ENCODE measurements at regions of chr5 and their contacts with region 1.

Region 1: GRCh38 chr5:54492178-54492577 is 25.4 kb upstream of the SNX18 start:
- DNase-seq: no peak
- ATAC-seq: no peak
- H3K4me3 ChIP-seq: no peak overlapping the region
- H3K4me3 Mint-ChIP-seq: no peak overlapping the region
- H3K27ac ChIP-seq: no peak overlapping the region
- H3K27ac Mint-ChIP-seq: no peak overlapping the region
- H3K4me1 ChIP-seq: no peaks in the 10 kb centered on the region
- H3K4me1 Mint-ChIP-seq: peaks cover 0 to 4% (median 0%) of the 10 kb centered on the region in 3 donors
- H3K27me3 ChIP-seq: peaks cover 0 to 4% of the 10 kb centered on the region in 2 experiments
- H3K27me3 Mint-ChIP-seq: peaks cover 4 to 5% of the 10 kb centered on the region in 2 donors

Region 2: DNA sequence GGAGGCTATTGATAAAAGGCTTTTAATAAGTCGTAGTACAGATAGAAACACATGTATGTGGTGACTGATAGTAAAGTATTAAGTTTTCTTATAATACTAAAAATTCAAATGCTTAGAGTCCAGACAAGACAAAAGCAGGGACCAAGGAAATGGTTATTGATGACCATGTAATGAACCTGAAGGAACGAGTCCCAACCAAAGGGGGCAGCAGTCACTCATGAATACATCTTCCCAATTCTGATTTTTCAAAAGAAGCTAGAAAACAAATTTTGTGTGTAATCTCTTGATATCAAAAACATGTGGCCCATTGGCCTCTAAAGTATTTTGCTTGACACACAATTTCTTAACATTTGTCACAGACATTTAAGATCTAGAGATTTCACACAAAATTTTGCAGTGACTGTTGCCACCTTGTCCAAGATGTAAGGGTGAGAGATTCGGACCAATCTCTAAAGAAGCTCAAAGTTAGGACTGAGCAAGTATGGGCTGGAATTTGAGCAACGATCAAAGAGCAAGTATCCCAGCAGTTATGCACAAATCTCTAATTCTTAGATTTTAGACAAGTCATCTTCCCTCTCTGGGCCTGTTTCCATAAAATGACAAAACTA is 248.6 kb before region 1 on chr5:
- CTCF ChIA-PET with region 1: interaction called, 9 to 16 read pairs
- POLR2A ChIA-PET with region 1: no interaction called
- DNase-seq: peak in 24 of 35 experiments; percentile 3 to 62 (median 16)
- ATAC-seq: no peak
- H3K4me3 ChIP-seq: no peak overlapping the region
- H3K4me3 Mint-ChIP-seq: no peak overlapping the region
- H3K27ac ChIP-seq: no peak overlapping the region
- H3K27ac Mint-ChIP-seq: no peak overlapping the region
- H3K4me1 ChIP-seq: no peaks in the 10 kb centered on the region
- H3K4me1 Mint-ChIP-seq: peaks cover 9 to 18% (median 14%) of the 10 kb centered on the region in 3 donors
- H3K27me3 ChIP-seq: no peaks in the 10 kb centered on the region
- H3K27me3 Mint-ChIP-seq: no peaks in the 10 kb centered on the region

Region 3: DNA sequence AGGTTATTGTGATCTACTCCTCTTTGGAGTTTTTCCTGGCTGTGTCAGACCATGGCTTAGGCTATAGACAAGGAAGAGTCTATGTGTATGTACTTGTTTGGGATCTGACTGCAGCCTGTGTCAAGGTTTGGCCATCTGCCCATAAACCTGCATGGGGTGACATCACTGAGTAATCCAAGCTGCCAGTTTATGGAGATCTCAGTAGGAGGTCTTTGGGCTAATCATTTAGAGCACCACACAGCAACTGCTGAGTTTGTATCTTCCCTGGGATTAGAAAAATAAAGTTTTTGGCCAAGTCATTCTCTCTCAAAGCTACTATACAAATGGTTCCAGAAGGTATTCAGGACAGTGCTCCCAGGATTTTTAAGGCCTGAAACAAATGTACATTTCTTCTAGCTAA is 102.2 kb before region 1 on chr5:
- CTCF ChIA-PET with region 1: no interaction called
- POLR2A ChIA-PET with region 1: no interaction called
- DNase-seq: no peak
- ATAC-seq: no peak
- H3K4me3 ChIP-seq: no peak overlapping the region
- H3K4me3 Mint-ChIP-seq: no peak overlapping the region
- H3K27ac ChIP-seq: no peak overlapping the region
- H3K27ac Mint-ChIP-seq: no peak overlapping the region
- H3K4me1 ChIP-seq: no peaks in the 10 kb centered on the region
- H3K4me1 Mint-ChIP-seq: no peaks in the 10 kb centered on the region
- H3K27me3 ChIP-seq: no peaks in the 10 kb centered on the region
- H3K27me3 Mint-ChIP-seq: no peaks in the 10 kb centered on the region

Region 4: DNA sequence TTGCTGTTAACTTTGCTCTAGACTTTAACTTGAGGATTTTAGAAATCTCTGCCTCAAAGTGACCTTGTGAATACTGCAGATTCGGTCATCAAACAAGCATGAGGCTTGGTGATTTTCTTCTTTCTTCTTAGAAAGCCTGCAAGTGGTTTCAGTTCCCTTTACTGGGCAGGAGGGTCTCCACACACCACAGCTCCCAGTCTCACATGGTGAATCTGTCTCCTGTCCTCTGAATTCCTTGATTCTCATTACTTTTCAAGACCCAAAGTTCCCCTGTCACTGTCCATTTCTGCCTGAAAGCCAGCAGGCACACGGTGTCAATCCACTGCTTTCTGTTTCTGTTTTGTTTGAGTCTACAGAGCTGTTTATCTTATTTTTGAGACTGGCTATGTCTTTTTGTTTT is 22.6 kb before region 1 on chr5:
- CTCF ChIA-PET with region 1: interaction called, 4 to 11 read pairs
- POLR2A ChIA-PET with region 1: no interaction called
- DNase-seq: no peak
- ATAC-seq: no peak
- H3K4me3 ChIP-seq: no peak overlapping the region
- H3K4me3 Mint-ChIP-seq: peak overlapping the region in 2 of 3 donors; percentile 13 to 24
- H3K27ac ChIP-seq: no peak overlapping the region
- H3K27ac Mint-ChIP-seq: no peak overlapping the region
- H3K4me1 ChIP-seq: no peaks in the 10 kb centered on the region
- H3K4me1 Mint-ChIP-seq: peaks cover 7 to 10% (median 9%) of the 10 kb centered on the region in 3 donors
- H3K27me3 ChIP-seq: peaks cover 0 to 9% of the 10 kb centered on the region in 2 experiments
- H3K27me3 Mint-ChIP-seq: peaks cover 5 to 9% of the 10 kb centered on the region in 2 donors

Region 5: GRCh38 chr5:54480296-54480695 is 11.9 kb before region 1 on chr5:
- CTCF ChIA-PET with region 1: interaction called in 1 of 2 experiments, 11 read pairs
- POLR2A ChIA-PET with region 1: no interaction called
- DNase-seq: no peak
- ATAC-seq: no peak
- H3K4me3 ChIP-seq: no peak overlapping the region
- H3K4me3 Mint-ChIP-seq: no peak overlapping the region
- H3K27ac ChIP-seq: no peak overlapping the region
- H3K27ac Mint-ChIP-seq: no peak overlapping the region
- H3K4me1 ChIP-seq: no peaks in the 10 kb centered on the region
- H3K4me1 Mint-ChIP-seq: no peaks in the 10 kb centered on the region
- H3K27me3 ChIP-seq: peaks cover 0 to 6% of the 10 kb centered on the region in 2 experiments
- H3K27me3 Mint-ChIP-seq: peaks cover 18 to 24% of the 10 kb centered on the region in 2 donors

Region 6: GRCh38 chr5:54537725-54538124 is 45.5 kb after region 1 on chr5:
- CTCF ChIA-PET with region 1: no interaction called
- POLR2A ChIA-PET with region 1: no interaction called
- DNase-seq: no peak
- ATAC-seq: no peak
- H3K4me3 ChIP-seq: no peak overlapping the region
- H3K4me3 Mint-ChIP-seq: no peak overlapping the region
- H3K27ac ChIP-seq: no peak overlapping the region
- H3K27ac Mint-ChIP-seq: no peak overlapping the region
- H3K4me1 ChIP-seq: peaks cover 5 to 12% of the 10 kb centered on the region in 2 experiments
- H3K4me1 Mint-ChIP-seq: peaks cover 54 to 61% (median 54%) of the 10 kb centered on the region in 3 donors
- H3K27me3 ChIP-seq: no peaks in the 10 kb centered on the region
- H3K27me3 Mint-ChIP-seq: no peaks in the 10 kb centered on the region

Region 7: DNA sequence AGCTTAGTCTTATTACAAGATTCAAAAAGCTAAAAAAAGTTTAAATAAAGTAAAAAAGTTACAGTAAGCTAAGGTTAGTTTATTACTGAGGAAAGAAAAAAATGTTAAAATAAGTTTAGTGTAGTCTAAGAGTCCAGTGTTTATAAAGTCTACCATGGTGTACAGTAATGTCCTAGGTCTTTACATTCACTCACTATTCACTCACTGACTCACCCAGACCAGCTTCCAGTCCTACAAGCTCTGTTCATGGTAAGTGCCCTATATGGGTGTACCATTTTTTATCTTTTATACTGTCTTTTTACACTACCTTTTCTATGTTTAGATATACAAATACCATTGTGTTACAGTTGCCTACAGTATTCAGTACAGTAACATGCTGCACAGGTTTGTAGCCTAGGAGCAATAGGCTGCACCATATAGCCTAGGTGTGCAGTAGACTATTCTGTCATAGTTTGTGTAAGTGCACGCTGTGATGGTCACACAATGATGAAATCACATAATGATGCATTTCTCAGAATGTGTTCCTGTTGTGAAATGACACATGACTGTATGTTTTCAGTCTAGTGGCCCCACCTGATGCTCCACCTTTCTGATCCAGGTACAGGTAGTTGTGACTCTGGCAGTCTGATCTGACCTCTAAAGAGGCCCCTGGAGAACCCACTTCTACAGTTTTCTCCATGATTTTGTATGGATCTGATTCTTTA is 71.1 kb after region 1 on chr5:
- CTCF ChIA-PET with region 1: no interaction called
- POLR2A ChIA-PET with region 1: no interaction called
- DNase-seq: no peak
- ATAC-seq: no peak
- H3K4me3 ChIP-seq: no peak overlapping the region
- H3K4me3 Mint-ChIP-seq: no peak overlapping the region
- H3K27ac ChIP-seq: no peak overlapping the region
- H3K27ac Mint-ChIP-seq: no peak overlapping the region
- H3K4me1 ChIP-seq: no peaks in the 10 kb centered on the region
- H3K4me1 Mint-ChIP-seq: no peaks in the 10 kb centered on the region
- H3K27me3 ChIP-seq: no peaks in the 10 kb centered on the region
- H3K27me3 Mint-ChIP-seq: no peaks in the 10 kb centered on the region

Region 8: GRCh38 chr5:54844905-54845566 is 352.9 kb after region 1 on chr5:
- CTCF ChIA-PET with region 1: interaction called, 3 to 11 read pairs
- POLR2A ChIA-PET with region 1: interaction called in 1 of 2 experiments, 4 read pairs
- DNase-seq: peak in 1 of 35 experiments; percentile 72
- ATAC-seq: peak; percentile 44 to 60 (median 51)
- H3K4me3 ChIP-seq: no peak overlapping the region
- H3K4me3 Mint-ChIP-seq: peak overlapping the region; percentile 26 to 47 (median 40)
- H3K27ac ChIP-seq: no peak overlapping the region
- H3K27ac Mint-ChIP-seq: peak overlapping the region; percentile 9 to 66
- H3K4me1 ChIP-seq: no peaks in the 10 kb centered on the region
- H3K4me1 Mint-ChIP-seq: peaks cover 4 to 6% (median 6%) of the 10 kb centered on the region in 3 donors
- H3K27me3 ChIP-seq: peaks cover 0 to 5% of the 10 kb centered on the region in 2 experiments
- H3K27me3 Mint-ChIP-seq: peaks cover 9 to 11% of the 10 kb centered on the region in 2 donors